ENCODE measurements at regions of chr9 and their contacts with region 1.

Region 1: DNA sequence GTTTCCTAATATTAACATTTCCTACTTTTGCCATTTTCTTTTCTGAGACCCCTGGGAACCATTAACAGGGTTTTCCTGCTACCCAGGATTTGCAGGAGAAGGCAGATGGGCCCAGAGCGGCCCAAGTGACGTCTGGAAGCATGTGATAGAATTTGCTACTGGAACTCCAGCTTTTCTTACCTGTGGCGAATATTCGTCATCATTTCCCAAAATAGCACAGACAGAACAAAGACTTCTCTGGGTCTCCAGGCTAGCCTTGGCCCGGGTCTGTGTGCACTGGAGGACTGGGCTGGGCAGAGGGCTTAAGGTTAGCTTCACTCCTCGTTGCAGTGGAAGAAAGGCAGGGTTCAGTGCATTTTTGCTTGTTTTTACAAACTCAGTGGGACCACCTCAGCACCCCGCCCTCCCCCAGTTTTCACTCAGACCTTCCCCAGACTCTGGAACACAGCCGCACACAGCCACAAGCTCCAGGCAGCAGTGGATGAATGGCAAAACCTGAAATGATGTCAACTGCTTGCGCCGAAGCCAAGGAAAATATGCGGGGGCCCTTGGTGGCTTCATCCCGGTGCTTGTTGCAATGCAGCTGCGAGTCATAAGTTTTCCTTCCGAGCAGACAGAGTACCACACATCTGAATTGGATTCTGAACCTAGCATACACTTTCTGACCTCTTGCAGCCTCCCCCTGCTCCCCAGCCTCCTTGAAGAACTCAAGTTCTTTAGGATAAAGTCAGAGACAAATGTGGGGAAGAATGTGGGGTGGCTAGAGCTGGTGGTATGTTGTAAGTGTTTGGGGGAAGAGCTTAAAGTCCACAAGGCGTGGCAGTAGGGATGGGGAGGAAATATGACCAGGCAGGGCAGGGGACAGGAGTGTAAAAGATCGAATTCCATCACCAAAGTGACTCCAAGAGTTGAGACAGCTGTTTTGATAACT is 586.0 kb downstream of the CCDC171 start:
- DNase-seq: peak; percentile 63
- H3K4me3 ChIP-seq: no peak overlapping the region
- CTCF ChIP-seq: no peak

Region 2: DNA sequence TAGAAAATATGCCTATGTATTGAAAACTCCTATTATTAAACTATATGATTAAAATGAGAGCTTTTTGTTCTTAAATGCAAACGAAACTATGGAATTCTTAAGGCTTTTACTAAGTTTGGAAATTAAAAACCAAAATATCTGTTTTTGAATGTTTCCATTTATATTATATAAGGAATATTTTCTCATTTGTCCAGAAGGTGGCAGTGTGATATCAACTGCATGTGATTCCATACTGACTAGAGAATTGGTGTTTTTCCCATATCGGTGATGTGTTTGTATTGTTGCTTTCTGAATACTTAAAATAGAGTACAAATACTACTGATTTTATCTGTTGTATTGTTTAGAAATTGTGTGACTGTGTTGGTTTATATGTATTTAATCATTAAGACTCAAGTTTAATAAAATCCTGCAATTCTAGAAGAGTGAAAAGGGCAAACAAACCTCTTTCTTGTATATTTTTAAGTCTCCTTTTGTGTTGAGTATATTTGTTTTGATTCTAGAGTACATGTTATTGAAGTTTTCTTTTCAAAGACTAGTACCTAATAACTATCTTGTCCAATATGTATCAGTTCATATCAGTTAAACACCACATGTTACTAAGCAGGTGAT is 265.2 kb before region 1 on chr9:
- CTCF ChIA-PET with region 1: interaction called, 57 read pairs
- POLR2A ChIA-PET with region 1: no interaction called
- DNase-seq: no peak
- H3K4me3 ChIP-seq: no peak overlapping the region
- CTCF ChIP-seq: peak; percentile 26

Region 3: GRCh38 chr9:16126042-16126441 is 12.8 kb before region 1 on chr9:
- CTCF ChIA-PET with region 1: interaction called, 22 read pairs
- POLR2A ChIA-PET with region 1: interaction called, 3 read pairs
- DNase-seq: no peak
- H3K4me3 ChIP-seq: no peak overlapping the region
- CTCF ChIP-seq: no peak

Measured in AG04449 (cell line).